ENCODE measurements at regions of chr1 and their contacts with region 1.

Region 1: GRCh38 chr1:19251305-19252196 is at the starts of genes EMC1 and MRTO4:
- DNase-seq: peak; percentile 87
- H3K4me3 Mint-ChIP-seq: peak within 1 kb of the TSS; percentile 99
- H3K27ac Mint-ChIP-seq: peak within 1 kb of the TSS; percentile 98
- H3K4me1 Mint-ChIP-seq: peaks cover 22% of the 10 kb centered on the region
- H3K27me3 Mint-ChIP-seq: no peaks in the 10 kb centered on the region
- total RNA-seq, gene EMC1: 63.9 and 78.3 TPM in 2 replicates
- total RNA-seq, gene MRTO4: 134 and 137 TPM in 2 replicates

Region 2: DNA sequence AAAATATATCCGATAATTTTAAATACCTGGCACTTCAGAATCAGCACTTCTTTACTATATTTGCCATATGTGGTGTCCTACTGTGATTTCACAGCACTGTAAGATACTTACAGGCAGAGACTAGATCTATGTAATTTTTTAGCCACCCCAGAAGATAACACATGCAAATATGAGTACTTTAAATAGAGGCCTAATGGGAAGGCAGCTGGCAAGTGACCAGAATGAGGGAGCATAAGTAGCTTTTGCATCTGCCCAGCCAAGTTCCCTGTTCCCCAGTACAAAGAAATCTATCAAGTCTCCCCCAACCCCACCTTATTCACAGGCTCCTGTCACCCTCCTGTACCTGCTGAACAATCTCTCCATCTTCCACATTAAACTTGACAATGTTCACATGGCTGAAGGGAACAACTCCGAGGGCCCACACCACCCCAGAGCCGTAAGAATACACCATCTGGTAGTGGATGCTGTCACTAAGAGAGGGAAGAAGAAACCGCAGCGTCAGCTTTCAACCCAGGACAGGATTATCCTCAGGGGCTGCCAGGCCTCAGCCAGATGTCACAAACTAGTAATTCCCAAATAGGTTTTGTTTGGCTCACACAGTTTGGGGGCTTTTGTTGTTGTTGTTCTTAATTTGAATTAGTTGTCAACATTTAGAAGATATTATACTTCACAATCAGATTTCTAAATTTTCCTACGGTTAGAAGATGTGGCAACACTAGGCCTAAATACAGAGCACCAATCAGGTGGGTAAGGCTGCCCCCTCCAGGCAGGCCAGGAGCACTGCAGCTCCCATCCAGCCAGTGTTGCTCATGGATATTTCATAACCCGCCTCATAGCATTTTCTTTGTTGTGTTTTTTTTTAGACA is 10.6 kb before region 1 on chr1:
- intact Hi-C with region 1: loop called (anchors 1 kb)
- DNase-seq: peak; percentile 54
- H3K4me3 Mint-ChIP-seq: no peak overlapping the region
- H3K27ac Mint-ChIP-seq: no peak overlapping the region
- H3K4me1 Mint-ChIP-seq: no peaks in the 10 kb centered on the region
- H3K27me3 Mint-ChIP-seq: no peaks in the 10 kb centered on the region

Region 3: DNA sequence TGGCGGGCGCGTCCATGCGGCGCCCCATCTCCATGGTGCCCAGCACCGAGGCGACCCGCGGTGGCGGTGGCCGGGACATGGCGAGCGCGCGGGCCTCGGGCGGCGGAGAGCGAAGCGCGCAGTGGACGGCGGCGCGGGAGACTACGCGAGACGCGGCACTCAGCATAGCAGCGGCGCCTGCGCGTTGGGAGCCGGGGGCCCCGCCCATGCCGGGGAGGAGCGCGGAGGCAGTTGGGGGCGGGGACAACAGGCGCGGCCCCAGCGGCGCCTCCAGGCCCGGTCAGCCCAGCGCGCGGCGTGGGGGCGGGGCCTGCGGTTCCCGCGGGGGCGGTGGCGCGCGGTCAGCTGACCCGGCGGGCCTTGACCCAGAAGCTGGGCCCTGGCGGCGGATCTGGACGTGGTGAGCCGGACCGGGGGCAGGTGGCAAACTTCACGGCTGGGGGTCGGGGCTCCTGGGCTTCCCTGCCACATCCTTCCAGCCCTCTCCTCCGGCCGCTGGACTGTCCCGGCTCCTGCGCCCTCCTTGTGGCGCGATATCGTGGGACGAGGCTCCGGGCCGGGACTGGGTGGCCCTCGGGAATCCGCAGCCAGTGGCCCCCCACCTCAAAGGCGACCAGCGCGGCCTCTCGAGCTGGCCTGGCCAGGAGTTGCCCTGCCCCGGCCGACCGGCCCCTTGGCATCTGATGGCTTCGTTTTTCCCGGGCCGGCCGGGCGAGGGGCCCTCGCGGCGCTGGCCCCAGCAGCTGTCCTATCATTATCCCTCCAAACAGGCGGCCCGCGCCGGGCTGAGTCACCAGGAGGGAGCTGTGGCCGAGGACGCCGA is 60.6 kb after region 1 on chr1 and contains the starts of genes AKR7A2 and SLC66A1:
- intact Hi-C with region 1: loop called (anchors 2 kb)
- DNase-seq: peak; percentile 93
- H3K4me3 Mint-ChIP-seq: peak within 1 kb of the TSS; percentile 91
- H3K27ac Mint-ChIP-seq: peak within 1 kb of the TSS; percentile 87
- H3K4me1 Mint-ChIP-seq: peaks cover 30% of the 10 kb centered on the region
- H3K27me3 Mint-ChIP-seq: no peaks in the 10 kb centered on the region
- total RNA-seq, gene AKR7A2: 30.0 and 31.1 TPM in 2 replicates
- total RNA-seq, gene SLC66A1: 9.9 and 12.0 TPM in 2 replicates

Region 4: DNA sequence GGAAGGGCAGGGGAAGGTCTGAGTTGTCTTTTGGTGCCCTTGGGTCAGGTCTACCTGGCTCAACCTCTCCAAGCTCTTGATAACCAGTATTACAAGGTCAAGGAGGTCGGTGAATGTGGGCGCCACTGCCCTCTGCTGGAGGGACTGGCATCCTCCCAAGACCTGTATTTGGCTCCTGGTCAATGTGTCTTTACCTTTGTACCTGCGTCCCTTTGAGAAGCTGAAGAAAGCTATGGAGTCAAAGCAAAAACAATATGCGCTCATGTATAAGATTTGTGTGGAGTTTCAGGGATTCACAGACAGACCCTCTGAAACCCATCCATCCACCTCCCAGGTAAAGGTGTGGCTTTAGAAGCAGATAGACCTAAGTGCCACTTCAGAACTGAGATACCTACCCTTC is 330.8 kb after region 1 on chr1:
- intact Hi-C with region 1: loop called (anchors 5 kb)
- DNase-seq: peak; percentile 54
- H3K4me3 Mint-ChIP-seq: no peak overlapping the region
- H3K27ac Mint-ChIP-seq: peak overlapping the region; percentile 25
- H3K4me1 Mint-ChIP-seq: peaks cover 7% of the 10 kb centered on the region
- H3K27me3 Mint-ChIP-seq: peaks cover 24% of the 10 kb centered on the region

Region 5: GRCh38 chr1:19643602-19644394 is 392.2 kb after region 1 on chr1 and contains the start of gene NBL1:
- intact Hi-C with region 1: loop called (anchors 5 kb)
- DNase-seq: peak; percentile 75
- H3K4me3 Mint-ChIP-seq: peak within 1 kb of the TSS; percentile 94
- H3K27ac Mint-ChIP-seq: peak within 1 kb of the TSS; percentile 95
- H3K4me1 Mint-ChIP-seq: peaks cover 33% of the 10 kb centered on the region
- H3K27me3 Mint-ChIP-seq: peaks cover 24% of the 10 kb centered on the region
- total RNA-seq, gene NBL1: 53.0 and 55.5 TPM in 2 replicates

Region 6: GRCh38 chr1:19799877-19800804 is 548.6 kb after region 1 on chr1 and contains the start of gene TMCO4:
- intact Hi-C with region 1: no loop called
- DNase-seq: peak; percentile 34
- H3K4me3 Mint-ChIP-seq: peak within 1 kb of the TSS; percentile 86
- H3K27ac Mint-ChIP-seq: peak within 1 kb of the TSS; percentile 91
- H3K4me1 Mint-ChIP-seq: peaks cover 28% of the 10 kb centered on the region
- H3K27me3 Mint-ChIP-seq: peaks cover 15% of the 10 kb centered on the region
- total RNA-seq, gene TMCO4: 14.0 and 15.1 TPM in 2 replicates